H1 (cell line): ENCODE measurements at regions of chr4 and their contacts with region 1.

Region 1: GRCh38 chr4:25767877-25768725 is 94.7 kb downstream of the SEL1L3 start:
- DNase-seq: peak in 1 of 2 experiments; percentile 33
- H3K4me3 ChIP-seq: no peak overlapping the region
- H3K27ac ChIP-seq: no peak overlapping the region
- H3K4me1 ChIP-seq: no peaks in the 10 kb centered on the region
- H3K27me3 ChIP-seq: no peaks in the 10 kb centered on the region
- CTCF ChIP-seq: peak; percentile 82 to 92 (median 88)
- EP300 ChIP-seq: no peak
- POLR2A ChIP-seq: no peak
- RAD21 ChIP-seq: peak; percentile 96 to 98

Region 2: DNA sequence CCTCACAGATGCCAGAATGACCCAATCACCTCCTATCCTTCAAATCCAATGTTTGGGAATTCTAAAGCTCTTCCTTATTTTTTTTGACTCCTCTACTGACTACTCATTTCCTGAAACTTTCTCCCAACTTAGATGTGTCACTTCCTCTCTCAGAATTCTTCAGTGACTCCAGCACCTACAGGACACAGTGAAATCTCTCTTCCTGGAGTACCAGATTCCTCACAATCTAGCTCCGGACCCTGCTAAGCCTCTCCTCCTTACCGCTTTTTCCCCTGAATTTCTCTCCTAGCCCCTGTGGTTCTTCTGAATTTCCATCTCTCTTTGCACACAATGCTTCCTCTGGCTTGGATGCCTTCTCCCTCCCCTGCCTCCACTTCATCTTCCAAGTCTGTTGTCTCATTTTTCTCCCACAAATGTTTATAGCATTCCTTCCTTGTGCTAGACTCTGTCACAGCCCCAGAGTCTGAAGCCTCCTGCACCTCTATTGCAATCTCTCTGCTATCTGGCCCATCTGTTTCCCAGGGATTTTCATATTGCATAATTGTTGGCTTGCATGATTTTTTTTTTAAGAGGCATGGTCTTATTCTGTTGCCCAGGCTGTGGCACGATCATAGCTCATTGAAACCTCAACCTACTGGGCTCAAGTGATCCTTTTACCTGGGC is 310.9 kb before region 1 on chr4:
- CTCF ChIA-PET with region 1: interaction called, 12 read pairs
- POLR2A ChIA-PET with region 1: no interaction called
- DNase-seq: no peak
- H3K4me3 ChIP-seq: no peak overlapping the region
- H3K27ac ChIP-seq: no peak overlapping the region
- H3K4me1 ChIP-seq: no peaks in the 10 kb centered on the region
- H3K27me3 ChIP-seq: no peaks in the 10 kb centered on the region
- CTCF ChIP-seq: no peak
- EP300 ChIP-seq: no peak
- POLR2A ChIP-seq: no peak
- RAD21 ChIP-seq: no peak

Region 3: DNA sequence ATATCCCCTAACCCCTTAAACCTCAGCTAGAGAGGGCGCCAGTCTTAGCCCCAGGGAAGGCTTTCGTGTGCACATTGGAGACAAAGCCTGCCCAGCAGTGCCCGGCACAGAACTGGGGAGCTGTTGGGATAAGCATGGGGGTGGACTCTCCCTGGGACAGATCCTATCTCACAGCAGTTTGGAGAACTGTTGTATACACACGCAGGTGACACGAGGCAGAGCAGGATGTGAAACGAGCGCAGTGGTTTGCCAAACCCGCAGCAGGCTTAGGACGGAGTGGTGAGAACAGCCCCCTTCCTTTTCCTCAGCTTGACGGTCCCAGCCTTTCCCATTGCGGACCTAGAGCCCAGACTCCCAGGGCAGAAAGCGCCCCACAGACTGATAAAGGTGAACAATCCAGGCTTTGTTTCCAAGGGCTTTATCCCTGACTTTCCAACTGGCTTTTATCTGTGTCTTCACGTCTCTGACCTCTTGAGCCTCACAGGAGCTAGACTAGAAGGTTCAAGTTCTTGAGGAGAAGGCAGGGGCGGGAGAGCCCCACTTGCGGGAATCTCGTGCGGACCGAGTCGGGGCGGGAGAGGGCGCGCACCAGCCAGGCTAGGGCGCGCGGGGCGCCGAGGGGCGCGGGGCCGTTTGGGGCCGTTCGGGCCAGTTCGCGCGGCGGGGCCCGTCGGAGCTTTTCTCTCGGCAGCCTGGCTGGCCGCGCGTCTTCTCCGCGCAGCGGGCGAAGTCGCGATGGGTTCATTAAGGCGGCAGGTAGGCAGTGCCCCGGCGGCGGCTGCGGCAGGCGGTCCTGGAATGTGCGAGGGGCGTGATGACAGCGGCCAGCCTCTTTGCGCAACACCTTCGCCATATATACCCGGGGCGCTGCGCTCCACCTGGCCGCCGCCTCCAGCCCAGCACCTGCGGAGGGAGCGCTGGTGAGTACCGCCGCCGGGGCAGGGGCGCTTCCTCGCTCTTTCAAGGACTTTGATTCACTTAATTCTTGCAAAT is 112.8 kb before region 1 on chr4 and contains the start of gene SLC34A2:
- CTCF ChIA-PET with region 1: interaction called, 11 read pairs
- POLR2A ChIA-PET with region 1: no interaction called
- DNase-seq: peak; percentile 46 to 84
- H3K4me3 ChIP-seq: peak within 1 kb of the TSS; percentile 31 to 58 (median 38)
- H3K27ac ChIP-seq: no peak within 1 kb of the TSS
- H3K4me1 ChIP-seq: peaks cover 14 to 28% (median 18%) of the 10 kb centered on the region in 4 experiments
- H3K27me3 ChIP-seq: peaks cover 1 to 36% (median 34%) of the 10 kb centered on the region in 4 experiments
- CTCF ChIP-seq: peak in 1 of 3 experiments; percentile 3; a peak in 2 of 4 replicates
- EP300 ChIP-seq: peak in 1 of 2 experiments; percentile 9; a peak in 1 of 3 replicates
- POLR2A ChIP-seq: peak in 1 of 2 experiments; percentile 2; a peak in 1 of 3 replicates
- RAD21 ChIP-seq: peak in 1 of 2 experiments; percentile 25; a peak in 2 of 4 replicates
- total RNA-seq, gene SLC34A2: 2.9 and 3.4 TPM in 2 replicates

Region 4: DNA sequence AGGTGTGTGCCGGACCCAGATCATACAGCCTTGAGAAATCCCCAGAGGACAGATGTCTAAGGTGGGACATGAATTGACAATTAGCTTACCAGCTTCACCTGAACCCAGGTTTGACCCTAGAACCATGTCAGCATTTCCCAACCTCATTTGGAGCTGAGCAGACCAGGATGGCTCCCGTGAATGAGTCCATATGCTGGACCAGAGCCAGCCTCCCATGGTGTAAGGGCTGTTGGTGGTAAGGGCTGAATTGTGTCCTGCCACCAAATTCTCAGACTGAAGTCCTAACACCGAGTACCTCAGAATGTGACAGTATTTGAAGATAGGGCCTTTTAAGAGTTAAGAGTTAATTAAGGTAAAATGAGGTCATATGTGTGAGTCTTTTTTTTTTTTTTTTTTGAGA is 24.1 kb before region 1 on chr4:
- CTCF ChIA-PET with region 1: interaction called, 16 read pairs
- POLR2A ChIA-PET with region 1: no interaction called
- DNase-seq: no peak
- H3K4me3 ChIP-seq: no peak overlapping the region
- H3K27ac ChIP-seq: no peak overlapping the region
- H3K4me1 ChIP-seq: no peaks in the 10 kb centered on the region
- H3K27me3 ChIP-seq: no peaks in the 10 kb centered on the region
- CTCF ChIP-seq: no peak
- EP300 ChIP-seq: no peak
- POLR2A ChIP-seq: no peak
- RAD21 ChIP-seq: no peak

Region 5: GRCh38 chr4:25783943-25784342 is 15.8 kb after region 1 on chr4:
- CTCF ChIA-PET with region 1: interaction called, 11 read pairs
- POLR2A ChIA-PET with region 1: interaction called, 3 read pairs
- DNase-seq: no peak
- H3K4me3 ChIP-seq: no peak overlapping the region
- H3K27ac ChIP-seq: no peak overlapping the region
- H3K4me1 ChIP-seq: no peaks in the 10 kb centered on the region
- H3K27me3 ChIP-seq: no peaks in the 10 kb centered on the region
- CTCF ChIP-seq: no peak
- EP300 ChIP-seq: no peak
- POLR2A ChIP-seq: no peak
- RAD21 ChIP-seq: no peak